Panc1 (cell line): ENCODE measurements at regions of chr1 and their contacts with region 1.

Region 1: GRCh38 chr1:159197561-159198557 is 6.8 kb upstream of the ACKR1 start:
- DNase-seq: peak; percentile 48
- ATAC-seq: peak; percentile 86
- H3K4me3 ChIP-seq: no peak overlapping the region
- H3K27ac ChIP-seq: no peak overlapping the region
- H3K4me1 ChIP-seq: no peaks in the 10 kb centered on the region
- H3K27me3 ChIP-seq: peaks cover 2% of the 10 kb centered on the region; the same call in 1 of the 2 replicates
- CTCF ChIP-seq: peak; percentile 83

Region 2: DNA sequence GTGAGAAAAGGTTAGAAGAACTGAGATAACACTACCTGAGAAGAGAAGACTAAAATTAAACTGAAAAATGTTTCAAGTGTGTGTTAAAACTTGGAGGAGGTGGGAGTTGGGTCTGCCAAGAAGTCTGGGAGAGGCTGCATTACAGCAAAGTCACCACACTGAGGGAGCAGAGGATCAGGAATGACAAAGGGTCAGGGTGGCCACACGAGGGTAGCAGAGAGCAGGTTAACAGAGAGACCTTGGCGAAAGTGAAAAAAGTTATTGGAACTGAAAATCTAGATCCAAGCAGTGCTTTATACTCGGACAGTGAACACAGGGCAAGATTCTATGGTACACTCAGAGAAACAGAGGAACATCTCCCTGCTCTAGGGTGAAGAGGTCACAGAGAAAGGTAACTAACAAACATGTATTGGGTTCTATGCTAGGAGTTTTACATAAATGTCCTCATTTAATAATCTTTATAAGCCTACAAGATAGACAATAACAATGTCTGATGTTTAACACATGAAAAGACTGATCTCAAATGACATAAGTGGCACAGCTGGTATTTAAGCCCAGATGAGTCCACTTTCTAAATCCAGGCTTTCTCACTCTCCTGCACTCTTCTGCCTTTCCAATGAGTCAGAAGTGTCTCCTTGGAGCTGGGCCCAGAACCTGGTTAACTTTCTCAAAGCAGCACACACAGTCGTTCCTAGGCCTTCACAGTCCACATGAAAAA is 36.7 kb before region 1 on chr1:
- CTCF ChIA-PET with region 1: interaction called, 6 read pairs
- POLR2A ChIA-PET with region 1: no interaction called
- in situ Hi-C with region 1: no loop called
- intact Hi-C with region 1: loop called (anchors 5 kb)
- DNase-seq: peak; percentile 69
- ATAC-seq: peak; percentile 99
- H3K4me3 ChIP-seq: no peak overlapping the region
- H3K27ac ChIP-seq: no peak overlapping the region
- H3K4me1 ChIP-seq: no peaks in the 10 kb centered on the region
- H3K27me3 ChIP-seq: peaks cover 8% of the 10 kb centered on the region
- CTCF ChIP-seq: peak; percentile 95

Region 3: DNA sequence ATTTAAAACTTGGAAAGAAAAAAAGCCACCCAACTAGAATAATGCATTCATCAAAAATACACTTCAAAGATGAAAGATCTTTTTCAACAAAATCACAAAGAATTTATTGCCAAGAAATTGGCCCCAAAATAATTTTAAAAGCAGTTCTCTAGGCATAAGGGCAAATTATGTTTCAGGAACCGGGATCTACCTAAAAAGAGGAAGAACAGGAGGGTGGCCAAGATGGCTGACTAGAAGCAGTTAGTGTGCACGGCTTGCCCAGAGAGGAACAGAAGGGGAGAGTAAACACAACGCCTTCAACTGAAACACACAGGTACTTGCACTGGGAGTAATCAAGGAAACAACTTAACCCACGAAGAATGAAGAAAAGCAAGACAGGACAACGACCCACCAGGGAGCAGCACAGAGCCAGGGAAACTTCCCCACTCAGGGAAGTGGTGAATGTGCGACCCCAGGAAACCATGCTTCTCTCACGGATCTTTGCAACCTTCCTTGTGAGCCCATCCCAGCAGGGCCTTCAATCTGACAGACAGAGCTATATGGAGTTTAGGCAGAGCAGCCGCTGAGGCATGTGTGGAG is 52.9 kb after region 1 on chr1:
- CTCF ChIA-PET with region 1: no interaction called
- POLR2A ChIA-PET with region 1: no interaction called
- in situ Hi-C with region 1: no loop called
- intact Hi-C with region 1: no loop called
- DNase-seq: no peak
- ATAC-seq: no peak
- H3K4me3 ChIP-seq: no peak overlapping the region
- H3K27ac ChIP-seq: no peak overlapping the region
- H3K4me1 ChIP-seq: no peaks in the 10 kb centered on the region
- H3K27me3 ChIP-seq: no peaks in the 10 kb centered on the region
- CTCF ChIP-seq: no peak